IMR-90 (cell line): ENCODE measurements at regions of chr16 and their contacts with region 1.

Region 1: GRCh38 chr16:69225121-69225520 is 38.2 kb downstream of the SNTB2 start:
- DNase-seq: no peak
- ATAC-seq: no peak
- H3K4me3 ChIP-seq: no peak overlapping the region
- H3K27ac ChIP-seq: no peak overlapping the region
- H3K4me1 ChIP-seq: peaks cover 8% of the 10 kb centered on the region
- H3K27me3 ChIP-seq: no peaks in the 10 kb centered on the region
- CTCF ChIP-seq: no peak
- POLR2A ChIP-seq: no peak
- RAD21 ChIP-seq: no peak

Region 2: GRCh38 chr16:68490829-68491575 is 734.1 kb before region 1 on chr16:
- CTCF ChIA-PET with region 1: no interaction called
- POLR2A ChIA-PET with region 1: no interaction called
- dilution Hi-C with region 1: no loop called
- in situ Hi-C with region 1: no loop called
- intact Hi-C with region 1: no loop called
- DNase-seq: peak; percentile 61
- ATAC-seq: no peak
- H3K4me3 ChIP-seq: no peak overlapping the region
- H3K27ac ChIP-seq: no peak overlapping the region
- H3K4me1 ChIP-seq: no peaks in the 10 kb centered on the region
- H3K27me3 ChIP-seq: peaks cover 12% of the 10 kb centered on the region
- CTCF ChIP-seq: no peak
- POLR2A ChIP-seq: no peak
- RAD21 ChIP-seq: no peak

Region 3: DNA sequence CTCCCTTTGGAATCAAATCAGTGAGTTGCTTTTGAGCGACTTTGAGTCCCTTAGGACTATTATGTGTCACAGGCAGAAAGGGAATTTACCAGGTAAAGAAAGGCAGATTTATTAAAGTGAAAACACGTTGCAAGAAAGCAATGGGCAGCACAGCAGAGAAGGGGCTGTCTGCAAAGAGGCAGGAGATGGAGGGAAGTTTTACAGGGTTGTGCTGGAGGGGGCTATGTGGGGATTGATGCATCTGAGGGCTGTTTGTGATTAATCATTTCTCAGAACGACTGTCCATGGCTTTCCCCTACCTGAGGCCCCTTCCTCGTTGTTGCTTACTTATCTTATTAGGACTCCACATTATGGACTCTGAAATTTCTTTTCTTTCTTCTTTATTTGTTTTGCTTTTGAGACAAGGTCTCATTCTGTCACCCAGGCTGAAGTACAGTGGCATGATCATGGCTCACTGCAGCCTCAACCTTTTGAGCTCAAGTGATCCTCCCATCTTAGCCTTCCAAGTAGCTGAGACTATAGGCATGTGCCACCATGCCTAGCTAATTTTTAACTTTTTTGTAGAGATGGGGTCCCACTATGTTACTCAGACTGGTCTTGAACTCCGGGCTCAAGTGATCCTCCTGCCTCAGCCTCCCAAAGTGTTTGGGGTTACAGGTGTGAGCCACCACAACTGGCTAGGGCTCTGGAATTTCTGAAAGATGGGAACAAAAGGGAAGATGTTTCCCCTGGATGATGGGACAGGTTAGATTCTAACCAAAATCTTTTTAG is 542.5 kb after region 1 on chr16:
- CTCF ChIA-PET with region 1: no interaction called
- POLR2A ChIA-PET with region 1: interaction called, 14 read pairs
- dilution Hi-C with region 1: no loop called
- in situ Hi-C with region 1: no loop called
- intact Hi-C with region 1: no loop called
- DNase-seq: no peak
- ATAC-seq: no peak
- H3K4me3 ChIP-seq: no peak overlapping the region
- H3K27ac ChIP-seq: no peak overlapping the region
- H3K4me1 ChIP-seq: no peaks in the 10 kb centered on the region; the same call in 1 of the 2 replicates
- H3K27me3 ChIP-seq: no peaks in the 10 kb centered on the region
- CTCF ChIP-seq: no peak
- POLR2A ChIP-seq: no peak
- RAD21 ChIP-seq: no peak